ENCODE measurements at regions of chr1 and their contacts with region 1.

Region 1: DNA sequence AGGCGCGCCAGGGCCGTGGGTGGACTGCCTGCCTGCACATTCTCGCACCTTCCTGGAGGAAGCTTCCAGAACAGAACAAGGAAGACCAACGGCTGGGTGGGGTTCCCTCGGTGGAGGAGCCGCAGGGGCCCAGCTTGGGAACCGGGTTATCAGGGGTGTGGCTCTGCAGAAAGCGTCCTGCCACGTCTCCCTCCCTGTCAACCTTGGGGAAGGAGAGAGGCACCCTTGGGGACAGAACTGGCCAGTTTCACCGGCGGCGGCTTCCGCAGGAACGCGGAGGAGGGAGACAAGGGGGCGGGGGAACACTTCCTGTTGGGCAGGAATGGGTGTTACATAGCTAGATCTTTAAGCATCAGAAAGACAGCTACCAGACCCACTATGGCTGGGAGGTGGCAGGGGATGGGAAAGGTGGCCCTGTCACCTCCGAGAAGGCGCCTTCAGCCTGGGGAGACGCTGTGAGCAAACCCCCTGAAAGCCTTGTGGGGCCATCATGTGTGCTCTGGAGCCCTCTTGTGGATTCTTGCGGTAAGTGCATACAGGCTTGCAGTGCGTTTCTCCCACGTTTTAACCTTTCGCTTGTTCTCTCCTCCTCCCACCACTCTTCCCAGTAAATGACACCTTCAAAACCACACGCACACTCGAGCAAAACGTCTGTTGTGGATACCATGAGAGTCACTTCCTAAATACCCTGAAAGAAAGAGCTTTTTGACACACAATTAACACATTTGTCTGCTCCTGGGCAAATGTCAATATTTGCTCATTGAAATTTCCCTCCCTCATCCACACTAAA is 3.8 kb upstream of the PLEKHA6 start:
- DNase-seq: peak; percentile 88
- ATAC-seq: peak; percentile 66
- H3K4me3 ChIP-seq: peak overlapping the region; percentile 27; the same call in 1 of the 2 replicates
- H3K27ac ChIP-seq: no peak overlapping the region
- H3K4me1 ChIP-seq: peaks cover 18% of the 10 kb centered on the region; the same call in 1 of the 2 replicates
- H3K27me3 ChIP-seq: no peaks in the 10 kb centered on the region
- CTCF ChIP-seq: peak; percentile 100

Region 2: DNA sequence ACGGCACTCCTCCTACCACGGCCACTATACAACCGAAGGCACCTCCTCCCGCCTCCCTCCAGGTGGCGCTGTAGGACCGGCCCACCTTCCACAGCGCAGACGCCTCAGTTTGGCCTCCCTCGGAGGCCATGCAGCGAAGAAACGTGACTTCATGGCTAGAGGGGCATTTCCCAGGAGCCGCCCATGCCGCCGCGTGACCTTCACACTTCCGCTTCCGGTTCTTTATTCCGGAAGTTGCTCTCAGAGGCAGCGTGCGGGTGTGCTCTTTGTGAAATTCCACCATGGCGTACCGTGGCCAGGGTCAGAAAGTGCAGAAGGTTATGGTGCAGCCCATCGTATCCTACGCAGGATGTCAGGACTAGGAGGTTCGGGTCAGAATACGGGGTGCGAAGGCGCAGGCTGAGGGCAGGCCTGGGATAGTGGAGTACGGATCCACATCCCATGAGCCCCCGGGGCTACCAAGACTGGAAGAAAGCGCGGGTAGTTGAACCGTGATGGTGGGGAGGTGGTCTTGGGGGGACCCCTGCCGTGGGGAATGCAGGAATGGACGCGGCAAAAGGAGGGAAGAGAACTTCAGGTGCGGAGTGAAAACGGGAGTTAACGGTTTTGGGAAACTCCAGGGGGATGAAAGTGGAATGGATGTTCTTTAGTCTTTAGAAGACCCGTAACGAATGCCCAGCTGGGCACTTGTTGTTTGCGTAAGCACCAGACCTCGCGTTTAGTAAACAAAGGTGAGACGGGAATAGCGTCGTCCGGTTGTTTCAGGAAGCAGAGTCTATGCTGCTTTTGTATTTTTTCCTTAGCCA is 501.9 kb before region 1 on chr1 and contains the start of gene SNRPE:
- CTCF ChIA-PET with region 1: no interaction called
- POLR2A ChIA-PET with region 1: no interaction called
- intact Hi-C with region 1: loop called (anchors 2 kb)
- DNase-seq: peak; percentile 99
- ATAC-seq: peak; percentile 86
- H3K4me3 ChIP-seq: peak within 1 kb of the TSS; percentile 91
- H3K27ac ChIP-seq: peak within 1 kb of the TSS; percentile 82
- H3K4me1 ChIP-seq: peaks cover 36% of the 10 kb centered on the region
- H3K27me3 ChIP-seq: no peaks in the 10 kb centered on the region
- CTCF ChIP-seq: peak; percentile 88
- total RNA-seq, gene SNRPE: 167 and 187 TPM in 2 replicates

Region 3: GRCh38 chr1:204162231-204163074 is 201.1 kb before region 1 on chr1:
- CTCF ChIA-PET with region 1: interaction called, 6 read pairs
- POLR2A ChIA-PET with region 1: no interaction called
- intact Hi-C with region 1: loop called (anchors 1 kb)
- DNase-seq: peak; percentile 98
- ATAC-seq: peak; percentile 92
- H3K4me3 ChIP-seq: no peak overlapping the region
- H3K27ac ChIP-seq: no peak overlapping the region
- H3K4me1 ChIP-seq: peaks cover 16% of the 10 kb centered on the region
- H3K27me3 ChIP-seq: no peaks in the 10 kb centered on the region
- CTCF ChIP-seq: peak; percentile 100

Region 4: GRCh38 chr1:204207136-204207616 is 156.4 kb before region 1 on chr1:
- CTCF ChIA-PET with region 1: interaction called, 3 read pairs
- POLR2A ChIA-PET with region 1: no interaction called
- intact Hi-C with region 1: loop called (anchors 1 kb)
- DNase-seq: peak; percentile 81
- ATAC-seq: peak; percentile 96
- H3K4me3 ChIP-seq: no peak overlapping the region
- H3K27ac ChIP-seq: no peak overlapping the region
- H3K4me1 ChIP-seq: peaks cover 22% of the 10 kb centered on the region
- H3K27me3 ChIP-seq: no peaks in the 10 kb centered on the region
- CTCF ChIP-seq: peak; percentile 99

Region 5: DNA sequence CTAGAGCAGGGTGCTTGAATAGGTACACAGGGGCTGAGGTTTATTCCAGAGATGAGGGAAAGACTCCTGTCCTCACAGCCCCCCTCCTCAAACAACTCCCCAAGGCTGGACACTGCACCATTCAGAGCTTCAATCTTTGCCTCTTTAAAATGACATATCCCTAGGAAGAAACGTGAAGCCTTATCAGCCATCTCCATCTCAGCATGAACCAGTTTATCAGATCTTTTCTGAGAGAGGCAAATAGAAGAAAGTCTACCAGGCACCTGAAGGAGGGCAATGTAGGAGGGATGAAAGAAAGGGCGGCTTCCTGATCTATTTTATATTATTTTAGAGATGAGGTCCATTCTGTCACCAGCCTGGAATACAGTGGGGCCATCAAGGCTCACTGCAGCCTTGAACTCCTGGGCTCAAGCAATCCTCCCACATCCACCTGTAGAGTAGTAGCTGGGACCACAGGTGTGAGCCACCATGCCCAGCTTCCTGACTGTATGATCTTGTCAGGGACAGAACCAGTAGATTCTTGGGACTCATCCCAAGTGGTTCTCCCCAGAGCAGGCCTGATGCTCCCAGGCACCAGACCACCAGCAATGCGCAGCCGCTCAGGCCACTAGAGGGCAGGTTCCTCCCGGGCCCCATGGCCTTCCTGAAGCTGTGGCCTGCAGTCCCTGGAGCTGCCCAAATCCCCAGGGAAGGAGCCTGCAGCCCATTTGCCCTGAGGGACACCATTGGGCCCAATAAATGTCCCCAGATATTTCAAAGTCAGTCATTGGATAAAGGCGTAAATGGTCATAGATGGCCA is 105.4 kb before region 1 on chr1:
- CTCF ChIA-PET with region 1: interaction called, 10 read pairs
- POLR2A ChIA-PET with region 1: no interaction called
- intact Hi-C with region 1: loop called (anchors 1 kb)
- DNase-seq: peak; percentile 78
- ATAC-seq: peak; percentile 97
- H3K4me3 ChIP-seq: no peak overlapping the region
- H3K27ac ChIP-seq: no peak overlapping the region
- H3K4me1 ChIP-seq: no peaks in the 10 kb centered on the region
- H3K27me3 ChIP-seq: no peaks in the 10 kb centered on the region
- CTCF ChIP-seq: peak; percentile 96

Region 6: DNA sequence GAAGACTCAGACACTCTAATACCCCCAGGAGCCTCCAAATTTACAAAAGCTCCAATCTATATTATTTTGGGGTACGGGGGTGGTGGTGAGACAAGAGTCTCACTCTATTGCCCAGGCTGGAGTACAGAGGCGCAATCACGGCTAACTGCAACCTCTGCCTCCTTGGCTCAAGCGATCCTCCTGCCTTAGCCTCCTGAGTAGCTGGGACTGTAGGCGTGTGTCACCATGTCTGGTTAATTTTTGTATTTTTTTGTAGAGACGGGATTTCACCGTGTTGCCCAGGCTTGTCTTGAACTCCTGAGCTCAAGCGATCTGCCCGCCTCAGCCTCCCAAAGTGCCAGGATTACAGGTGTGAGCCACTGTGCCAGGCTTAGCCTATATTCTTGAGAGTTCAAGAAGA is 59.9 kb before region 1 on chr1:
- CTCF ChIA-PET with region 1: interaction called, 7 read pairs
- POLR2A ChIA-PET with region 1: no interaction called
- intact Hi-C with region 1: loop called (anchors 2 kb)
- DNase-seq: no peak
- ATAC-seq: no peak
- H3K4me3 ChIP-seq: no peak overlapping the region
- H3K27ac ChIP-seq: no peak overlapping the region
- H3K4me1 ChIP-seq: peaks cover 32% of the 10 kb centered on the region
- H3K27me3 ChIP-seq: no peaks in the 10 kb centered on the region
- CTCF ChIP-seq: no peak

Region 7: GRCh38 chr1:204398217-204399081 is 34.9 kb after region 1 on chr1:
- CTCF ChIA-PET with region 1: interaction called, 3 read pairs
- POLR2A ChIA-PET with region 1: no interaction called
- intact Hi-C with region 1: loop called (anchors 1 kb)
- DNase-seq: peak; percentile 100
- ATAC-seq: peak; percentile 100
- H3K4me3 ChIP-seq: no peak overlapping the region
- H3K27ac ChIP-seq: no peak overlapping the region
- H3K4me1 ChIP-seq: peaks cover 4% of the 10 kb centered on the region; the same call in 1 of the 2 replicates
- H3K27me3 ChIP-seq: no peaks in the 10 kb centered on the region
- CTCF ChIP-seq: peak; percentile 99

Measured in PC-3 (cell line).